AG04449 (cell line): ENCODE measurements at regions of chr13 and their contacts with region 1.

Region 1: GRCh38 chr13:52652196-52652979 is at the start of gene SUGT1:
- DNase-seq: peak; percentile 80
- H3K4me3 ChIP-seq: peak within 1 kb of the TSS; percentile 82
- CTCF ChIP-seq: peak; percentile 79

Region 2: DNA sequence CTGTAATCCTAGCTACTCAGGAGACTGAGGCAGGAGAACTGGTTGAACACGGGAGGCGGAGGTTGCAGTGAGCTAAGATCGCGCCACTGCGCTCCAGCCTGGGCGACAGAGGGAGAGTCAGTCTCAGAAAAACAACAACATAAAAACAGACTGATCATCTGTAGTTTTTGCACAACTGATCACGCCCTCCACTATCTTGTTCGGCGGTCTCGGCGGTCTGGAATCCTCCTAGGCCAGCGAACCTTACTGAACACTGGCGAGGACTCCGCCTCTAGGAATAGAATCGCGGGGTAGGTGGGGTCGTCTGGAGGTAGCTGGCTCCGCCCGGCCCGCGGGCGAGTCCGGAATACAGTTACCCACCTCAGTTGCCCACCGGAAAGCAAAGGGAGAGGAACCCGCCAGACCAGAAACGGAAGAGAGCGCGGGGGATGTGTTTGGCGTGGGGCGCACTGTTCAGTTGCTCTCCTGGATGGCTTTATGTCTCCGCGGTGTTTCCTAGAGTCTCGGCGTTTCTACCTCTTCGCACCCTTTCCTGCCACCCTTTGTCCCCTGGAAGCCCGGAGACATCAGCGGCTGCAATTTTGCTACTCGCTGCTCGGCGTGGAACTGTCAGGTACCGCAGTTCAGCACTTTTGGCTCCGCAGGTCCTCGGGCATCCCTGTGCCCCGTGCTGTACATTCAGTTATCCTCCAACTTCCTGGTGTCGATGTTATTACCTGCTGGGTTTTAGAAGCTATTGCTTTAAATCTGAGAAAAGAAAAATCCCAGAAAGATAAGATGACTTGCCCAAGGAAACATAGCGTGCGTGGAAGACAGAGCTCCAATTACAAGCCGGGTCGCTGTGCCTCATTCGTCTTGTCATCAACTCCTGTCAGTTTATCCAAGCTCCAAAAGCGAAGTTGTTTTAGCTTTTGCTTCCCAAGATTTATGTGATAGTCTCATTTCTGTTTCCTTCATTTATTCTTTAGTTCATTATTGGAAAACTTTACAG is 35.0 kb before region 1 on chr13:
- CTCF ChIA-PET with region 1: interaction called, 7 read pairs
- POLR2A ChIA-PET with region 1: interaction called, 31 read pairs
- DNase-seq: peak; percentile 26
- H3K4me3 ChIP-seq: peak overlapping the region; percentile 95
- CTCF ChIP-seq: no peak

Region 3: DNA sequence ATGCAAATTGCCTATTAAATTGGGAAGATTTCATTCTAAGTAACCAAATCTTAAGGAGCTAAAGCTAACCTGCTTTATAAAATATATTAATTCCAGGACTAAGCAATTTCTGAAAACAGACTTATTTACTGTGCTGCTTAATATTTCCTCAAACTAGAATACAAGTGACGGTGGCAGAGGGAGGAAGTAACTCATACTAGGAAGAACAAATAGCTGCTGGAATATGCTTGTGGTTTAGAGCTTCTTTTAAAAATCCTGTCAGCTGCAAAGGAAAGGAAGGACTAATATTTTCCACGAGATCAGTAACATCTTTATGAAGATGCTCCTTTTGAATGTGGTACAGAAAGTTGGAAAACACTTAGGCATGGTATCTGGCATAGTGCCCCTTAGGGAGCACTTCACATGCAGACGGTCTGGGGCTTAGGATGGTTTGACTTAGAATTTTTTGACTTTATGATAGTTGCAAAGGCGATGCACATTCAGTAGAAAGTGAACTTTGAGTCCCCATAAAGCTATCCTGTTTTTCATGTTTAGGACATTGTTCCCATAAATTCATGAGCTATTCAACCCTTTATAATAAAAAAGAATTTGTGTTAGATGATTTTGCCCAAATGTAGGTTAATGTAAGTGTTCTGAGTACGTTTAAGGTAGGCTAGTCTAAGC is 13.6 kb before region 1 on chr13:
- CTCF ChIA-PET with region 1: interaction called, 11 read pairs
- POLR2A ChIA-PET with region 1: interaction called, 5 read pairs
- DNase-seq: no peak
- H3K4me3 ChIP-seq: no peak overlapping the region
- CTCF ChIP-seq: no peak

Region 4: DNA sequence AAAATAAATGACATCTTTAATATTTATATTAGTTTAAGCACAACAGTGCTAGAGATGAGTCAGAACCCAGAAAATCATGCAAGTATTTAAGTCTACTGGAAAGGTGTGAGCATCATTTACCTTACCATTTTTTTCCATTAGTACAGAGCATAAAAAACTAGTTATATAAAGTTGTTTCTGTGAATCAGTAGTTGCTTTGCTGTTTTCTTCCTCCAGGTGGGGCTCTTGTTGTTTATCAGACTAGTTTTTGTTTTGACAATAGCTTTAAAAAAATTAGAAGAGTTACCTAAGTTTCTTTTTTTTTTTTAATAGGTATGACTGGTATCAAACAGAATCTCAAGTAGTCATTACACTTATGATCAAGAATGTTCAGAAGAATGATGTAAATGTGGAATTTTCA is 12.9 kb after region 1 on chr13:
- CTCF ChIA-PET with region 1: interaction called, 44 read pairs
- POLR2A ChIA-PET with region 1: interaction called, 5 read pairs
- DNase-seq: no peak
- H3K4me3 ChIP-seq: no peak overlapping the region
- CTCF ChIP-seq: no peak